GM10248 (cell line): ENCODE measurements at regions of chr6 and their contacts with region 1.

Region 1: DNA sequence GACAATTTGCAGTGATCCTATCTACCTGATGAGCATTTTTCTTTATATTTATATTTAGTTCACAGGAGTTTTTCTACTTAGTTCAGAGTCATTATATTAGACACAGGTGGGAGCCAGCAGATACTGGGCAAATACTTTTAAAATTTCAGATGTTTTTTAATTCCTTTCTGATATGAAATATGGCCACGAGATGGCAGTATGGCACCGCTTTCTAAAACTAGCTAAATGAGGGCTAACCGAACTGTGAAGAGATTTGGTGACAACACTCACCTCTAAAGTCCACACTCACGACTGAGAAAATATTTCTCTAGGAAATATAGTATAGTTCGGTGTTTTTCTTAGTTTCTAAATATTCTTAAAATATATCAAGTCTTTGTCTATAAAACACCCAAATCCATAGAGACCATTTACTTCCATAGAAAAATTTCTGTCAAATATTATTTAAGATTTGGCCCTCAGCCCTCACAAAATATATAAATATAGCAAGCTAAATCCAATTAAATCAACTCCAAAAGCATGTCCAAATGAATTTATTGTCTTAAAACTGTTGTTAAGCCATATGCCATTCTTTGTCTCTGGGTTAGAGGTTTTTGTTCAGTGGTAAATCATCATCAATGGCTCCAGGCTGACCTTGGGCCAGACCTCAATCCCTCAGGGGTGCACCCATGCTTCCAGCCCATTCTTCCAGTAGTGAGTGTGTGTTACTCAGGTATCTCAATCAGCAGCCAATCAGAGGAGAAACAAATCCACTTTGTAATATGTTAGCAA is 63.6 kb downstream of the HUS1B start:
- DNase-seq: peak; percentile 67
- CTCF ChIP-seq: peak; percentile 42

Region 2: GRCh38 chr6:453152-453551 is 140.2 kb before region 1 on chr6:
- CTCF ChIA-PET with region 1: no interaction called
- POLR2A ChIA-PET with region 1: no interaction called
- DNase-seq: no peak
- CTCF ChIP-seq: no peak

Region 3: DNA sequence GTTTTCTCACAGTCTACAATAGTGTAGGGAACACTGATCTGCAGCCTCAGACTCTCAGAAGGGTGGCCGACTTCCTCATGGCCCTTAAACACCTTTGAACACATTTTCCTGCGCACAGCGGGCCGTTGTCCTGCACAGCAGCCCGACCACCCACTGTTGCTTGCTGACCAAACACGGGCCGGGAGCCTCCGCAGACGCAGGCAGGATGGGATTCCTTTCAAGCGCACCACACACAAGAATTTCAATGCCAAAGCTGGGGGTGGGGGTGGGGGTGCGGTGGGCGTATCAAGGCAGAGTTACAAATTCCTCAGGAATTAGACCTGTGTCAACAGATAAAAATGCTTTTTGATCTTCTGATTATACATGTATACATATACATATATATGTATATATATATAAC is 11.0 kb before region 1 on chr6:
- CTCF ChIA-PET with region 1: interaction called, 33 read pairs
- POLR2A ChIA-PET with region 1: no interaction called
- DNase-seq: no peak
- CTCF ChIP-seq: no peak

Region 4: DNA sequence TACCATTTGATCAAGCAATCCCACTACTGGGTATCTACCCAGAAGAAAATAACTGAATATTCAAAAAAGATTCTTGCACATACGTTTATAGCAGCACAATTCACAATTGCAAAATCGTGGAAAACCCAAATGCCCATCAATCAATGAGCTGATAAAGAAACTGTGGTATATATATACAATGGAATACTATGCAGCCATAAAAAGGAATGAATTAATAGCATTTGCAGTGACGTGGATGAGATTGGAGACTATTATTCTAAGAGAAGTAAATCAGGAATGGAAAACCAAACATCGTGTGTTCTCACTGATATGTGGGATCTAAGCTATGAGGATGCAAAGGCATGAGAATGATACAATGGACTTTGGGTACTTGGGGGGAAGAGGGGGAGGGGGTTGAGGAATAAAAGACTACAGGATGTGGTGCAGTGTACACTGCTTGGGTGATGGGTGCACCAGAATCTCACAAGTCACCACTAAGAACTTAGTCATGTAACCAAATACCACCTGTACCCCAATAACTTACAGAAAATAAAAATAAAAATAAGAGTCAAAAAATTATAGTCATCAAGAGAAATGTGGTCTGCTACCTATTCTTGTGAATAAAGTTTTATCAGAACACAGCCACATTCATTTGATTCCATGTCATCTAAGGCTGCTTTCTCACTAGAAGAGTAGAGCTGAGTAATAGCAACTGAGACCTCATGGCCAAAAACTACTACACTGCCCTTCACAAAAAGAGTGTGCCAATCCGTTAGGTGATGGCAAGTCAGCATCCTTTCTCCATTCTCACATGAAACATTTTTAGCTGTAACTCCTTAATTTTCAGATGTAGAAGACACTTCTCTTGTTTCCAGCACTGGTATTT is 72.3 kb after region 1 on chr6:
- CTCF ChIA-PET with region 1: no interaction called
- POLR2A ChIA-PET with region 1: no interaction called
- DNase-seq: no peak
- CTCF ChIP-seq: no peak

Region 5: GRCh38 chr6:683742-684440 is 90.6 kb after region 1 on chr6:
- CTCF ChIA-PET with region 1: interaction called, 10 read pairs
- POLR2A ChIA-PET with region 1: no interaction called
- DNase-seq: no peak
- CTCF ChIP-seq: no peak

Region 6: DNA sequence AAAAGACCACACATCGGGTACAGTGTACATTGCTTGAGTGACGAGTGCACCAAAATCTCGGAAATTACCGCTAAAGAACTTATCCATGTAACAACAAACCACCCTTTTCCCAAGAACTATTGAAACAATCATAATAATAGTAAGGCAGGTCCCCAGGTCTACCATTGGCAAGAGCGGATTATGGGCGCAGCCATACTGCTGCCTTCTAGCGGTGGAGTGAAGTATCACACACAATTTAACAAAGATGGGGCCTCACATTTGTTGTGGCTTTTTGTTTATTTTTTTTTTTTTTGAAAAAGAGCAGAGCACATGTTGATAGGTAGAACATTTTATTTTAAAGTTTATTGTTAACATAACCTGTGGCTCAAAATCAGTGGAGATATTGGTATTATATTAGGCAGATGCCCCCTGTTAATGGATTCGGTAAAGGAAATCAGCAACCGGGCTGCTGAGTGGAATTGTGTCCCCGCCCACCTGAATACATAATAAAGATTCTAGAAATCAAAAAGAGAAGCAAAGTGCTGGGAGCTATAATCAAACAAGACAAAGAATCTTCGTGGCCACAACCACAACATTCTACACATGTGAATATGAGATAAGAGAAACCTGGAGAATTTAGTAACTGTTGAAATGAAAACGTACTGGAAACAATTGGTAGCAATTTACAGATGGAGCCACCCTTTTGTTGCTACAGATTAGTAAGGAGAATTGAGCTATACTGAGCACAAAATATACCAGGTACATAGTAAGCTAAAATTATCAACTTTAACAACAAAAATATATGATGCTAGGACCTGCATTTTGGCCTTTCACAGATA is 193.8 kb after region 1 on chr6:
- CTCF ChIA-PET with region 1: interaction called, 21 read pairs
- POLR2A ChIA-PET with region 1: no interaction called
- DNase-seq: peak; percentile 48
- CTCF ChIP-seq: peak; percentile 47

Region 7: GRCh38 chr6:1396952-1397868 is 803.9 kb after region 1 on chr6:
- CTCF ChIA-PET with region 1: interaction called, 14 read pairs
- POLR2A ChIA-PET with region 1: no interaction called
- DNase-seq: peak; percentile 85
- CTCF ChIP-seq: peak; percentile 82